Activated T-helper 1 cell treated with anti-CD3 and anti-CD28 coated beads, Interleukin-12 subunit alpha, Interleukin-12 subunit beta, Interleukin-2, Interleukin-4 antibody, amounts not matched to agents 30 ng/mL and 10 ng/mL and 1 ng/mL, durations not matched to agents 14 hours and 24 hours and 36 hours (primary cell): ENCODE measurements at regions of chr10 and their contacts with region 1.

Region 1: GRCh38 chr10:14878266-14879054 is at the start of gene SUV39H2:
- DNase-seq: peak; percentile 95
- H3K4me3 Mint-ChIP-seq: peak within 1 kb of the TSS; percentile 96
- H3K27ac Mint-ChIP-seq: peak within 1 kb of the TSS; percentile 94
- H3K4me1 Mint-ChIP-seq: peaks cover 50% of the 10 kb centered on the region
- H3K27me3 Mint-ChIP-seq: no peaks in the 10 kb centered on the region
- total RNA-seq, gene SUV39H2: 43.3 and 51.7 TPM in 2 replicates

Region 2: DNA sequence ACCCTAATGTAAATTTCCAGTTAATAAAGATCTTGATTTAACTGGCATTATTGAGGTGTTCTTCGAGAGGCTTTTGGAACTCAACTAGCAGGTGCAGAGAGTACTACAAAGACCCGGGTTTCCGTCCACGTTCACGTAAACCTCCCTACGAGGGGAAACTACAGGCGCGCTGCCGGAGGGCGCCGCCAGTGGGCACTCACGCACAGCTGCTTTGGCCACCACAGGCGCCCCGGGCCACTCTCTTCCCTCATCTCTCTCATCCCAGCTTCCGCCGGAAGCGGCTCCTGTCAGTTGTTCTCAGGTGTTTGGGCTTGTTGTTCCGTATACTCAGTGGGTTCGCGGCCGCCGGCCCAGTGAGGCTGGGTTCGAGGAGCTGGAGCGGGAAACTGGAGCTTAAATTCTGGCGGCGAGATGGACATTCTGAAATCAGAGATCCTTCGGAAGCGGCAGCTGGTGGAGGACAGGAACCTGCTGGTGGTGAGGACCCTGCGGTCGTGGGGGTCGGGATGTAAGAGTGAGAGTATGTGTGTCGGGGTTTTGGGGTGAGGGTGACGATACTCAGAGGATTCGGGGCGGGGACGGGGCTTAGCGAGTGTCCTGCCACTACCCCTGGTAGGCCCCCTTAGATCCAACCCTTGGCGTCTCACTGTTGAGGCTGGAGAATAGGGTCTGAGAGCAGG is 1291.6 kb before region 1 on chr10 and contains the start of gene PRPF18:
- intact Hi-C with region 1: loop called (anchors 2 kb)
- DNase-seq: peak; percentile 89
- H3K4me3 Mint-ChIP-seq: peak within 1 kb of the TSS; percentile 100
- H3K27ac Mint-ChIP-seq: peak within 1 kb of the TSS; percentile 98
- H3K4me1 Mint-ChIP-seq: peaks cover 16% of the 10 kb centered on the region
- H3K27me3 Mint-ChIP-seq: peaks cover 11% of the 10 kb centered on the region
- total RNA-seq, gene PRPF18: 24.8 and 25.6 TPM in 2 replicates

Region 3: GRCh38 chr10:14499601-14499904 is 378.9 kb before region 1 on chr10:
- intact Hi-C with region 1: loop called (anchors 2 kb)
- DNase-seq: no peak
- H3K4me3 Mint-ChIP-seq: no peak overlapping the region
- H3K27ac Mint-ChIP-seq: no peak overlapping the region
- H3K4me1 Mint-ChIP-seq: peaks cover 14% of the 10 kb centered on the region
- H3K27me3 Mint-ChIP-seq: peaks cover 4% of the 10 kb centered on the region

Region 4: GRCh38 chr10:14588084-14588937 is 290.1 kb before region 1 on chr10:
- intact Hi-C with region 1: loop called (anchors 2 kb)
- DNase-seq: peak; percentile 52
- H3K4me3 Mint-ChIP-seq: peak overlapping the region; percentile 74
- H3K27ac Mint-ChIP-seq: peak overlapping the region; percentile 97
- H3K4me1 Mint-ChIP-seq: peaks cover 94% of the 10 kb centered on the region
- H3K27me3 Mint-ChIP-seq: no peaks in the 10 kb centered on the region

Region 5: GRCh38 chr10:14954001-14954770 is 75.7 kb after region 1 on chr10 and contains the start of gene DCLRE1C:
- intact Hi-C with region 1: loop called (anchors 1 kb)
- DNase-seq: peak; percentile 89
- H3K4me3 Mint-ChIP-seq: peak within 1 kb of the TSS; percentile 94
- H3K27ac Mint-ChIP-seq: peak within 1 kb of the TSS; percentile 95
- H3K4me1 Mint-ChIP-seq: peaks cover 57% of the 10 kb centered on the region
- H3K27me3 Mint-ChIP-seq: no peaks in the 10 kb centered on the region
- total RNA-seq, gene DCLRE1C: 15.5 and 20.9 TPM in 2 replicates

Region 6: GRCh38 chr10:15097011-15097812 is 218.8 kb after region 1 on chr10 and contains the start of gene RPP38:
- intact Hi-C with region 1: loop called (anchors 1 kb)
- DNase-seq: peak; percentile 94
- H3K4me3 Mint-ChIP-seq: peak within 1 kb of the TSS; percentile 100
- H3K27ac Mint-ChIP-seq: peak within 1 kb of the TSS; percentile 99
- H3K4me1 Mint-ChIP-seq: peaks cover 29% of the 10 kb centered on the region
- H3K27me3 Mint-ChIP-seq: peaks cover 10% of the 10 kb centered on the region
- total RNA-seq, gene RPP38: 19.6 and 24.8 TPM in 2 replicates